ENCODE measurements at regions of chr1 and their contacts with region 1.

Region 1: GRCh38 chr1:201137579-201138310 is 10.8 kb upstream of the ASCL5 start:
- DNase-seq: peak; percentile 90
- H3K4me3 ChIP-seq: no peak overlapping the region
- H3K27ac ChIP-seq: peak overlapping the region; percentile 64 to 79 (median 76)
- H3K4me1 ChIP-seq: peaks cover 0 to 25% (median 19%) of the 10 kb centered on the region in 4 donors
- H3K27me3 ChIP-seq: no peaks in the 10 kb centered on the region
- CTCF ChIP-seq: no peak
- EP300 ChIP-seq: no peak
- POLR2A ChIP-seq: no peak

Region 2: DNA sequence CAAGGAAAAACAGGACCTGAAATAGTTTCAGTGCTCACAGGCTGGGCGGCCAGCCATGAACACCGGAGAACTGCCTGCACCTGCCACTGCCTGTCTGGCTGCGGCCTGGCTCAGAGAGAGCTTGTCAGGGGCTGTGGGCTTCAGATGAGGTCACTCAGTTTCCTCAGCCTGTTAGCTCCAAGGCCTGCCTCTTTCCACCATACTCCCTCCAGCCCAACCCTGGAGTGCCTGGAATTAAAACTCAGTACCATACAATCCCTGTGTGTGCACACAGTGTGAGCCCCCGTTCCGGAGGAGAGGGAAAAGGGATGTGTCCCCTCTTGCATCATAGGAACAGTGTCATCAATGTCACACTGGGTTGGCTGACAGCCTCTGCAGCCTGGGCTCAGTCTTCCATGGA is 41.7 kb before region 1 on chr1:
- intact Hi-C with region 1: no loop called
- DNase-seq: no peak
- H3K4me3 ChIP-seq: no peak overlapping the region
- H3K27ac ChIP-seq: no peak overlapping the region
- H3K4me1 ChIP-seq: no peaks in the 10 kb centered on the region
- H3K27me3 ChIP-seq: no peaks in the 10 kb centered on the region
- CTCF ChIP-seq: no peak
- EP300 ChIP-seq: no peak
- POLR2A ChIP-seq: no peak

Region 3: GRCh38 chr1:201229771-201230635 is 92.3 kb after region 1 on chr1:
- intact Hi-C with region 1: loop called (anchors 10 kb)
- DNase-seq: no peak
- H3K4me3 ChIP-seq: no peak overlapping the region
- H3K27ac ChIP-seq: no peak overlapping the region
- H3K4me1 ChIP-seq: no peaks in the 10 kb centered on the region
- H3K27me3 ChIP-seq: no peaks in the 10 kb centered on the region
- CTCF ChIP-seq: no peak
- EP300 ChIP-seq: no peak
- POLR2A ChIP-seq: no peak

Measured in sigmoid colon (tissue), 7 donors.